T-cell (primary cell): ENCODE measurements at regions of chr14 and their contacts with region 1.

Region 1: GRCh38 chr14:51248016-51248987 is 8.3 kb downstream of the TMX1 start:
- DNase-seq: no peak
- ATAC-seq: no peak
- H3K4me3 ChIP-seq: no peak overlapping the region
- H3K4me3 Mint-ChIP-seq: no peak overlapping the region
- H3K27ac ChIP-seq: no peak overlapping the region
- H3K27ac Mint-ChIP-seq: no peak overlapping the region
- H3K4me1 ChIP-seq: peaks cover 0 to 8% of the 10 kb centered on the region in 2 experiments
- H3K4me1 Mint-ChIP-seq: peaks cover 25 to 28% (median 25%) of the 10 kb centered on the region in 3 donors
- H3K27me3 ChIP-seq: no peaks in the 10 kb centered on the region
- H3K27me3 Mint-ChIP-seq: no peaks in the 10 kb centered on the region

Region 2: DNA sequence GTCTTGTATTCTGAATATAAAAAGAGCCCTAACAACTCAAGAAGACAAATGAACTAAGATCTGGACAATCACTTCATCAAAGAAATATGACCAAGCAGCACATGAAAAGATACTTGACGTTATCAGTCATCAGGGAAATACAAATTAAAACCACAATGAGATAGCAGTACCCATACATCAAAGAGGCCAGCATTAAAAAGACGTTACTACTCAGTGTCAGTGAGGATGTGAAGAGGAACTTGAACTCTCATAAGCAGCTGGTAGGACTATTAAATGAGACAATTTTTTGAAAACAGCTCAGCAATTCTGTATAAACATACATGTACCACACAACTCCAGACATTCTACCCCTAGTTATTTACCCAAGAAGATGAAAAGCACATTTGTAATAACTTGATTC is 1646.7 kb after region 1 on chr14:
- CTCF ChIA-PET with region 1: no interaction called
- POLR2A ChIA-PET with region 1: interaction called in 1 of 2 experiments, 10 read pairs
- DNase-seq: peak in 1 of 35 experiments; percentile 9
- ATAC-seq: peak in 2 of 4 experiments; percentile 35 to 61
- H3K4me3 ChIP-seq: no peak overlapping the region
- H3K4me3 Mint-ChIP-seq: no peak overlapping the region
- H3K27ac ChIP-seq: no peak overlapping the region
- H3K27ac Mint-ChIP-seq: no peak overlapping the region
- H3K4me1 ChIP-seq: no peaks in the 10 kb centered on the region
- H3K4me1 Mint-ChIP-seq: peaks cover 5 to 9% (median 6%) of the 10 kb centered on the region in 3 donors
- H3K27me3 ChIP-seq: no peaks in the 10 kb centered on the region
- H3K27me3 Mint-ChIP-seq: no peaks in the 10 kb centered on the region